ENCODE measurements at regions of chr13 and their contacts with region 1.

Region 1: DNA sequence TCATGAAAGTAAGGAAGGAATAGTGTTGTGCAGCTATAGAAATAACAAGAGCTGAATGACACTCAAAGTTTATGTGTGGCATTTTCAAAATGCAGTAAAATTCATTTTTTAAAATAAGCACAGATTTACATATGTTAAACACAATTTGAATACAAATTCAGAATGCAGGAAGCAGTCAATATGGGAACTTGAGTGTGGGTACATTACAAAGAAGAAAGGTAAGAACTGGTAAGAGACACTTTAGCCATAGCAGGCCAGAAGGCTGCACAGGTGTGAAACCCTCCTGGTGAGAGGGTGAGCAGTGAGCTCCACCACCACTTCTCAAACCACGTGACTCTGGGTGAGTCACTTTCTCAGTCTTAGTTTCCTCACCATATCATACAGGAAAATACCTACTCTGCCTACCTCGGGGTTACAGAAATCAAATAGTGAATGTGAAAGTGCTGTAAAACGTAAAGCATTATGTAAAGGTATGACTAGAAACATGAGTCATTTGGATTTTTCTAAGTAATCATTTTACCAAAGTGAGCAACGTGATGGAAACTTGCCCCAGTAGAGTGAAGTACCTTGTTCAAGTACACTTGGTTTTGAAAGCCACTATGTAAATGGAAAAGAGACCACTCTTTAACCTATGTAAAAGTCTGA is 40.5 kb downstream of the USP12 start:
- DNase-seq: peak; percentile 80
- H3K4me3 Mint-ChIP-seq: peak overlapping the region; percentile 60
- H3K27ac Mint-ChIP-seq: peak overlapping the region; percentile 77
- H3K4me1 Mint-ChIP-seq: peaks cover 89% of the 10 kb centered on the region
- H3K27me3 Mint-ChIP-seq: no peaks in the 10 kb centered on the region

Region 2: GRCh38 chr13:27022571-27023311 is 108.4 kb before region 1 on chr13:
- intact Hi-C with region 1: loop called (anchors 1 kb)
- DNase-seq: no peak
- H3K4me3 Mint-ChIP-seq: no peak overlapping the region
- H3K27ac Mint-ChIP-seq: peak overlapping the region; percentile 32
- H3K4me1 Mint-ChIP-seq: peaks cover 23% of the 10 kb centered on the region
- H3K27me3 Mint-ChIP-seq: peaks cover 7% of the 10 kb centered on the region

Region 3: GRCh38 chr13:27171827-27172494 is 40.9 kb after region 1 on chr13:
- intact Hi-C with region 1: loop called (anchors 1 kb)
- DNase-seq: peak; percentile 92
- H3K4me3 Mint-ChIP-seq: peak overlapping the region; percentile 81
- H3K27ac Mint-ChIP-seq: peak overlapping the region; percentile 87
- H3K4me1 Mint-ChIP-seq: peaks cover 53% of the 10 kb centered on the region
- H3K27me3 Mint-ChIP-seq: no peaks in the 10 kb centered on the region

Region 4: GRCh38 chr13:27353166-27353583 is 222.1 kb after region 1 on chr13:
- intact Hi-C with region 1: loop called (anchors 1 kb)
- DNase-seq: peak; percentile 34
- H3K4me3 Mint-ChIP-seq: no peak overlapping the region
- H3K27ac Mint-ChIP-seq: peak overlapping the region; percentile 40
- H3K4me1 Mint-ChIP-seq: peaks cover 15% of the 10 kb centered on the region
- H3K27me3 Mint-ChIP-seq: peaks cover 7% of the 10 kb centered on the region

Region 5: GRCh38 chr13:27620377-27621115 is 489.4 kb after region 1 on chr13 and contains the start of gene LNX2:
- intact Hi-C with region 1: loop called (anchors 1 kb)
- DNase-seq: peak; percentile 97
- H3K4me3 Mint-ChIP-seq: peak within 1 kb of the TSS; percentile 88
- H3K27ac Mint-ChIP-seq: peak within 1 kb of the TSS; percentile 88
- H3K4me1 Mint-ChIP-seq: peaks cover 57% of the 10 kb centered on the region
- H3K27me3 Mint-ChIP-seq: no peaks in the 10 kb centered on the region
- total RNA-seq, gene LNX2: 4.1 and 4.5 TPM in 2 replicates